Dendritic cell treated with granulocyte-macrophage colony-stimulating factor and Interleukin-4, amounts not matched to agents 40 ng/mL and 50 ng/mL, for 4 days (primary cell): ENCODE measurements at regions of chr1 and their contacts with region 1.

Region 1: DNA sequence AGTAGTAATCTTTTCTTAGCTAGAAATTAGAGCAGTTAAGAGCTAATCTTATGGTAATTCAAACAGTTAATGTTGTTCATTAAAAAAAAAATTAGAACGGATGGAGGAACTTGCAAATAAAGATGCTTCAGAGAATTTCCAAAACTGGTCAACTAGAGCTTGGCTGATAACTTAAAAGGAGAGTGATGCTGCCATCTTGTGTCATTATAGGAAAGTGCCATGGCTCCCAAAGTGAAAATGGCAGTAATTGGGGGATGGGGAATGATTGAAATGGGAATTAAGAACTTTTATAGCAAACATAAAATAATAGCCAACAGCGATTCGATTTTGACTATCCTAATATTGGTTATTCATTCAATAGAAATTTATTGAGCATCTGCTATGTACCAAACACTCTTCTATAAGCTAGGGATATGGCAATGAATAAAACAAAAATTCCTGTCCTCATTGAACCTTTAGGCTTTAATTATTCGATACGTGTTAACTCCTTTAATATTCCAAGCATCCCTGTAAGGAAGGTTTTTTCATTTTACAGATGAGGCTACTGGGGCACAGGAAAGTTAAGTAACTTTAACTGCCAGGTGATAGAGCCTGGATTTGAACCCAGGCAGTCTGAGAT is 5.7 kb upstream of the PLPP3 start:
- H3K4me3 Mint-ChIP-seq: no peak overlapping the region
- H3K27ac Mint-ChIP-seq: no peak overlapping the region
- H3K4me1 Mint-ChIP-seq: peaks cover 5% of the 10 kb centered on the region
- H3K27me3 Mint-ChIP-seq: peaks cover 13% of the 10 kb centered on the region

Region 2: GRCh38 chr1:55140546-55140983 is 1444.5 kb before region 1 on chr1:
- intact Hi-C with region 1: loop called (anchors 10 kb)
- H3K4me3 Mint-ChIP-seq: no peak overlapping the region
- H3K27ac Mint-ChIP-seq: no peak overlapping the region
- H3K4me1 Mint-ChIP-seq: no peaks in the 10 kb centered on the region
- H3K27me3 Mint-ChIP-seq: no peaks in the 10 kb centered on the region

Region 3: DNA sequence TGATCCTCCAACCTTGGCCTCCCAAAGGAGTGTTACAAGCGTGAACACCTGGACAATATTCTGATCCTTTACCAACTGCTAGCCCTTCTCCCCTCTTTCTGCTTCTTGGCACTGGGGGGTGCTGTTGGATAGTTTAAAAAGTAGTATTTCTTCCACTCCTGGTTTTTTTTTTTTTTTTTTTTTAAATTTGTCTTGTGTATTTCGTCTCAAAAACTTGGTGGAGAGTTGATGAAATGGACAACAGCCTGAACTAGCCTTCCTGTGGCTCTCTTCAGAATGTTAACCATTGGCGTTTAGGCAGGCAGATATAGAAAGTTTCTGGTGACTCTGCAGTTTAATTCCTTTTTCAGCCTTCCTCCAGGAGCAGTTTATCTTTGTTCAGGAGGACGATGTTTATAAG is 1300.2 kb before region 1 on chr1:
- intact Hi-C with region 1: loop called (anchors 5 kb)
- H3K4me3 Mint-ChIP-seq: no peak overlapping the region
- H3K27ac Mint-ChIP-seq: no peak overlapping the region
- H3K4me1 Mint-ChIP-seq: peaks cover 6% of the 10 kb centered on the region
- H3K27me3 Mint-ChIP-seq: peaks cover 36% of the 10 kb centered on the region

Region 4: GRCh38 chr1:55375617-55376258 is 1209.3 kb before region 1 on chr1:
- intact Hi-C with region 1: loop called (anchors 1 kb)
- H3K4me3 Mint-ChIP-seq: no peak overlapping the region
- H3K27ac Mint-ChIP-seq: no peak overlapping the region
- H3K4me1 Mint-ChIP-seq: no peaks in the 10 kb centered on the region
- H3K27me3 Mint-ChIP-seq: peaks cover 1% of the 10 kb centered on the region

Region 5: GRCh38 chr1:55478742-55479141 is 1106.3 kb before region 1 on chr1:
- intact Hi-C with region 1: loop called (anchors 2 kb)
- H3K4me3 Mint-ChIP-seq: no peak overlapping the region
- H3K27ac Mint-ChIP-seq: no peak overlapping the region
- H3K4me1 Mint-ChIP-seq: peaks cover 24% of the 10 kb centered on the region
- H3K27me3 Mint-ChIP-seq: peaks cover 17% of the 10 kb centered on the region

Region 6: GRCh38 chr1:55702064-55702463 is 883.0 kb before region 1 on chr1:
- intact Hi-C with region 1: loop called (anchors 10 kb)
- H3K4me3 Mint-ChIP-seq: no peak overlapping the region
- H3K27ac Mint-ChIP-seq: no peak overlapping the region
- H3K4me1 Mint-ChIP-seq: peaks cover 5% of the 10 kb centered on the region
- H3K27me3 Mint-ChIP-seq: no peaks in the 10 kb centered on the region

Region 7: DNA sequence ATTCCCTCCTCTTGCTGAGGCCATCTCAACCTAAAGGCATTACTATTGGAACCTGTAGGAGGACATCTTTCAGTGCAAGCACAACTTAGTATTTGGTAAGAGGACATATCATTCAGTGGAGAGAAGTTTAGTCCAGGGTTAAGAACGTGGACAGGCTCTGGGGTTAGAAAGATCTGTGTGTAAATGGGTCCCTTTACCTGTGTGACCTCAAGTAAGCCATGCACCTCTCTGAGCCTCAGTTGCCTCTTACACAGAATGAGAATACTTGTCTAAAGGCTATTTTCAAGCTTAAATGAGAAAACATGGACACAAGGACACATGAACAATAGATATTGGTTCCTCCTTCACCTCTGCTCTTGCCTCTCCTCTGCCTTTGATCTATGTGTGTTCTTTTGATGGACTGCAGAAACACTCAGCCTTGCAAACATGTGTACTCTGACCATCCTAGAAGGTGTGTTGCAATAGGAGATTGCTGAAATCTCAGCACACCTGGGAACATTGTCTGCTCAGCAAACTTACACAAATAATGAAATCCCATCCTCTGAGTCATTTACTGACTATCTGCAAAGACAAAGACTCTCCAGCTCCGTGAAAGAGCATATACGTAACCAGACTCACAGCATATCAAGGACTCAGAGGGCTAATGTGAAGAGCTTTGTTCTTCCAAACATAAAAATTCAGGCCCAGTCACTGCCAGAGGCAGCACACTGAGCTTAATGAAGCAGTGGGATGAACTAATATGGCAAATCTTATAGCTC is 695.1 kb after region 1 on chr1:
- intact Hi-C with region 1: no loop called
- H3K4me3 Mint-ChIP-seq: no peak overlapping the region
- H3K27ac Mint-ChIP-seq: no peak overlapping the region
- H3K4me1 Mint-ChIP-seq: no peaks in the 10 kb centered on the region
- H3K27me3 Mint-ChIP-seq: no peaks in the 10 kb centered on the region